ENCODE measurements at regions of chr12 and their contacts with region 1.

Region 1: DNA sequence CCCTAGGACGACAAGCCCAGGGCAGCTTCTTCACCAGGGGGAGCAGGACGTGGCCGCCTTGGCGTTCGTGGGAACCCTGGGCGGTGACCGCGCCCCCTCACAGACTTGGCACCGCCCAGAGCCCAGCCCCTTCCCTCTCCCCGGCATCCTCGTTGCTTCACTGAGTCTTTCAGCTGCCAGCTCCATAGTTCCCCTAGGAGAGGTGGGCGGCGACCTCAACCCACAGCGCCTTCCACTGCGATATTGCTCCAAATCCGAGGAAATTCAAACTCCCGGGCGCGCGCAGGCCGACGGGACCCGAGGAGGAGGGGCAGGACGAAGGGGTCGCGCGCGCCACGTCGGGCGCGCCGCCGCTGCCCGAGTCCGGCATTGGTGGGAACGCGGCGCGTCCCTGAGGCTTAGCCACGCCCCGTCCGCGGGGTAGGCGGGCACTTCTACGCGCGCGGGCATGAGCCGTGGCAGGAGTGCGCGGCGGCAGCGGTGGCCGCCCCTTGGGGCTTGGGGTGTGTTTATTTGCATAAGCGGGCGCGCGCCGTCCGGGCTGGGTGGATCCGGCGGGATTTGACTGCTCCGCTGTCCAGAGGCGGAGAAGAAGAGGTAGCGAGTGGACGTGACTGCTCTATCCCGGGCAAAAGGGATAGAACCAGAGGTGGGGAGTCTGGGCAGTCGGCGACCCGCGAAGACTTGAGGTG is at the starts of genes APAF1 and IKBIP:
- DNase-seq: peak; percentile 99
- H3K4me3 Mint-ChIP-seq: peak within 1 kb of the TSS; percentile 92
- H3K27ac Mint-ChIP-seq: peak within 1 kb of the TSS; percentile 95
- H3K4me1 Mint-ChIP-seq: peaks cover 21% of the 10 kb centered on the region
- H3K27me3 Mint-ChIP-seq: no peaks in the 10 kb centered on the region
- total RNA-seq, gene APAF1: 19.9 and 20.7 TPM in 2 replicates
- total RNA-seq, gene IKBIP: 35.0 and 36.9 TPM in 2 replicates

Region 2: DNA sequence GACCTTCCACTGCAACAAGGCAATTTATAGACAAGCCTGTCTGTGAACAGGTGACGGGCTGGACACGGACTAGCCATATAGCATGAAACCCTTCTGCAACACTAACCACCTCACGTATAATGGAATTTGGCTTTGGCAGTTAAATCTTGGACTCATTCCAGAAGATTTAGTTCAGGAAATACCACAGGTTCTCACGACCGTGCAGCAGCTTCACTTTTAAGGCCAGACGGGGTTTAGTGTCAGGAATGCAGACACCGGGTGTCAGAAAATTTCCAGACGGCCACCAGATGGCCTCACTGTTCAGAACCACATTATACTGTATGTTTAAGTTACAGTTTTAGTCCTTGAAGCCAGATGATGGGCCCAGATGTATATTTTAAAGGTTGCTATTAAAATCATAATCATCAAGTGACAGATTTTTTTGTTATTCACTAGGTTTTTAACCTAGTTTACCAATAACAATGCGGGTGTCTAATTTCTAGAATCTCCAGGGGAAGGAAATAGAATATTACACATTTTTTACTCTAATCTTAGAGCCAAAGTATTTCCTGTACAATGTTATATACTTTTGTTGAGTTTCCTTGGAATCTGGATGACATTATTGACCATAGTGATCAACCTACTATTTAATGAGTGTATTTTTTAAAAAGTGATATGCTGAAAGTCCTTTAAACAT is 220.0 kb before region 1 on chr12:
- intact Hi-C with region 1: loop called (anchors 5 kb)
- DNase-seq: peak; percentile 85
- H3K4me3 Mint-ChIP-seq: no peak overlapping the region
- H3K27ac Mint-ChIP-seq: no peak overlapping the region
- H3K4me1 Mint-ChIP-seq: peaks cover 2% of the 10 kb centered on the region
- H3K27me3 Mint-ChIP-seq: peaks cover 9% of the 10 kb centered on the region

Region 3: DNA sequence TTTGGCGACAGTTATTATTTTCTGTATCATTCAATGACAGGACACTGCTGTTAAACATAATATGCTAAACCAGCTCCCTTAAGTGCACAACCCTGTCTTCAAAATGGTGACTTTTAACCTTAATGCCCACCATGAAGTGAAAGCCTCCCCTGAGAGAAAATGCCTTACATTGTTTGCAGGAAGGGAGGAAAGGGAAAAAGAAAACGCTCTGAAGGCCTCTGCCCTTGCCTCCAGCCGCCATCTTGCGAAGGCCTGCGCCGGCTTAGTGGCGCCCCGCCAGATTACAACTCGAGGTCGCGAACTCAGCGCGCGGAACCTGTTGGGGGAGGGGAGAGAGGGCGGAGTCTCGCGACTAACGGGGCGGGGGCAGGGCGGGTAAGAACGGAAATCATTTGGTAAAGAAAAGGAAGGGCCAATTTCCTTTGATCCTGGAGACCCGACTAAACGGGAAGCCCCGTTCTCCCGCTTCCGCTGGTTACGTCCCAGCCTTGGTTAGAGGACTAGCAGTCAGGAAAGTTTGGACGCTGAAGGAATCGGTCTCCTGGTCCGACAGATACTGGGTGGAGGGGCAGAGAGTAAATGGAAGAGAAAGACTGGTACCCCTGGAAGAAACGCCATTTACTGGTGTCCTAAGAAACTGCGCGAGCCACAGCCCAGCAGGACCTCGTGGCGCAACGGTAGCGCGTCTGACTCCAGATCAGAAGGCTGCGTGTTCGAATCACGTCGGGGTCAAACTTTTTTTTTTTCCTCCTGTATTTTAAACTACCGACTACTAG is 141.1 kb before region 1 on chr12:
- intact Hi-C with region 1: loop called (anchors 1 kb)
- DNase-seq: peak; percentile 97
- H3K4me3 Mint-ChIP-seq: peak overlapping the region; percentile 92
- H3K27ac Mint-ChIP-seq: peak overlapping the region; percentile 99
- H3K4me1 Mint-ChIP-seq: peaks cover 26% of the 10 kb centered on the region
- H3K27me3 Mint-ChIP-seq: peaks cover 7% of the 10 kb centered on the region

Region 4: DNA sequence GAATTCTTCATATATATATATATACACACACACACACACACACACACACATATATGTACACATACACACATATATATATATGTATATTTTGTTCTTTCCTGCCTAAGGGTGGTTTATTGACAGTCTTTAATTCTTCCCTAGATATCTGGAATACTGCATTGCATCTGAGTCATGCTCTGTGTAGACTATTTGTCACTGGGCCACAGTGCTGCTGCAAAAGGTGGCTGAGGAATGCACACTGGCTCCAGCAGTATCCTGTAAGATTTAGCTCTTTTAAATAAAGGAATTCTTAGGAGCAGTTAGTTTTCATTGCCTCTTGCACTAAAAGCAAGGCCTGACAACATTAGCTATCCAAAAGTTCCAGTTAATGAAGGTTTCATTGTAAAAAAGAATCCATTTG is 201.1 kb after region 1 on chr12:
- intact Hi-C with region 1: no loop called
- DNase-seq: no peak
- H3K4me3 Mint-ChIP-seq: no peak overlapping the region
- H3K27ac Mint-ChIP-seq: no peak overlapping the region
- H3K4me1 Mint-ChIP-seq: peaks cover 3% of the 10 kb centered on the region
- H3K27me3 Mint-ChIP-seq: peaks cover 18% of the 10 kb centered on the region

Measured in activated CD4-positive, alpha-beta T cell treated with anti-CD3 and anti-CD28 coated beads, Interleukin-2, amount 10 ng/mL, durations not matched to agents 24 days and 14 days (primary cell).